ENCODE measurements at regions of chr3 and their contacts with region 1.

Region 1: DNA sequence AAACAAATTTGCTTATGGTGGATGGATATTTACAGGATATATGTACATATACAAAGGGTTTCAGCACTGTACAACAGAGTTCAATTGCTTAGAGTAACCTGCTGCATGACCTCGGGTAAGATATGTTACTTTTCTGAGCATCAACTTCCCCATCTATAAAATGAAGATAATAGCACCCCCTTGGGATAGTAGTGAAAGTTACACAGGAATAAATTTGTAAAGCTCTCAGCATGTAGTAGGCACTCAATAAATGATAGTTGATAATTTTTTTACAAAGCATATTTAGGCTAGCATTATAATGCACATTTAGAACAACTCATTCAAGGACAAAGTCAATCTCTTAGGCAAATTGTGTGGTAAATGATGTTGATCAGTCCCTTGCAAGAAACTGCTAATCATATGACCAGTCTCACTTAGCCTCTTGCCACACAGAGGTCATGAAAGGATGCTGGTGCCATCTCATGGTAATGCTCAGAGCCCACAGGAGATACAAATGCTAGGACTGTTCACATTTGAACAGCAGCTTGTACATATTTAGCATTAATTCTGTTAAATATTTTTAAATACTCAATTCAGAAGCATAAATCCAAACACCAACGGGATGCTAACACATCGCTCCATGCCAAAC is 123.9 kb downstream of the MAGI1 start:
- DNase-seq: peak; percentile 17
- H3K4me3 ChIP-seq: no peak overlapping the region
- H3K27ac ChIP-seq: peak overlapping the region; percentile 45
- H3K4me1 ChIP-seq: peaks cover 13% of the 10 kb centered on the region
- H3K27me3 ChIP-seq: no peaks in the 10 kb centered on the region
- CTCF ChIP-seq: no peak
- POLR2A ChIP-seq: no peak

Region 2: DNA sequence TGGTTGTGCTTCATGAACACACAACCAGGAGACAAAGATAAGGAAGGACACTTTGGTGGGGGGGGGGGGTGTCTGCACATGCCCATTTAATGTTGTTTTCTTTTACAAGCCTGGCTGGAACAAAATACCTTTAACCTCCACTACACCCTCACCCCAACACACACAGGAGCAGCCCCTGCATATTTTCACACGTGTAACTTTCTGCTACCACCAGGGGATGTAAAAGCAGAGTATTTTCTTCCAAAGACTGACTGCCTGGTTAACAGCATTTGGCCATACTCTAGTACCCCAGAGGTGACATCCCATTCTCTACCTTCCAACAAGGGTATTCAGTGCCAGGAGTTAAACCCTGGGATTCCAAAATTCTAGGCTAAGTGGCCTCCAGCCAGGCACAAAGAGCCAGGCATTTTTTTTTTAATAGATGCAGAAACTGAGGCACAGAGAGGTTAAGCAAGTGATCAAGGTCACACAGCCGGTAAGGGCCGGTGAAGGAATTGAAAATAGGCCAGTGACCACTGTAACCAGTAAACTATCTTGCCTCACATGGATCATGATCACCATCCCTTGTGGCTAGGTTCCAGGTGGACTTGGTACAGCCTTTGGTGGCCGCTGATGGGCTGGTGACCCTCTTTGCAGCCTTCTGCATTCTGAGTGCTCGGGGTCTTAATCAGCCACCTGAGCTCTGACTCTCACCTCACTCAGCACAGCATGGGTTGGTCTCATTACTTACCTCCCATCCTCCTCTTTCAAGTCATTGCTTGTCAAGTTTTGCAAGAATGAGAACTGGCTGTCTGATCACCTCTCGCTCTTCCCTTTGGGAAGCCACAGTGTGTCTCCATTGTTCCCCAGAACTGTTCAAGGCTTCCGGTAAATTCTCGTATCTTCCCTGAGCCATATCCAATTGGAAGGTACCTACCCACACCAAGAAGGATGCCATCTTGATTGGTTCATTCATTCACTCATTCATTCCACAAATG is 103.5 kb after region 1 on chr3:
- CTCF ChIA-PET with region 1: no interaction called
- POLR2A ChIA-PET with region 1: no interaction called
- dilution Hi-C with region 1: no loop called
- intact Hi-C with region 1: loop called (anchors 5 kb)
- DNase-seq: no peak
- H3K4me3 ChIP-seq: no peak overlapping the region
- H3K27ac ChIP-seq: no peak overlapping the region
- H3K4me1 ChIP-seq: no peaks in the 10 kb centered on the region
- H3K27me3 ChIP-seq: no peaks in the 10 kb centered on the region
- CTCF ChIP-seq: peak in 1 of 2 donors; percentile 7
- POLR2A ChIP-seq: no peak

Region 3: GRCh38 chr3:66756468-66757036 is 841.7 kb after region 1 on chr3:
- CTCF ChIA-PET with region 1: no interaction called
- POLR2A ChIA-PET with region 1: no interaction called
- dilution Hi-C with region 1: no loop called
- intact Hi-C with region 1: no loop called
- DNase-seq: no peak
- H3K4me3 ChIP-seq: no peak overlapping the region
- H3K27ac ChIP-seq: no peak overlapping the region
- H3K4me1 ChIP-seq: no peaks in the 10 kb centered on the region
- H3K27me3 ChIP-seq: no peaks in the 10 kb centered on the region
- CTCF ChIP-seq: no peak
- POLR2A ChIP-seq: no peak